Heart right ventricle (tissue), 16 donors: ENCODE measurements at regions of chr9 and their contacts with region 1.

Region 1: DNA sequence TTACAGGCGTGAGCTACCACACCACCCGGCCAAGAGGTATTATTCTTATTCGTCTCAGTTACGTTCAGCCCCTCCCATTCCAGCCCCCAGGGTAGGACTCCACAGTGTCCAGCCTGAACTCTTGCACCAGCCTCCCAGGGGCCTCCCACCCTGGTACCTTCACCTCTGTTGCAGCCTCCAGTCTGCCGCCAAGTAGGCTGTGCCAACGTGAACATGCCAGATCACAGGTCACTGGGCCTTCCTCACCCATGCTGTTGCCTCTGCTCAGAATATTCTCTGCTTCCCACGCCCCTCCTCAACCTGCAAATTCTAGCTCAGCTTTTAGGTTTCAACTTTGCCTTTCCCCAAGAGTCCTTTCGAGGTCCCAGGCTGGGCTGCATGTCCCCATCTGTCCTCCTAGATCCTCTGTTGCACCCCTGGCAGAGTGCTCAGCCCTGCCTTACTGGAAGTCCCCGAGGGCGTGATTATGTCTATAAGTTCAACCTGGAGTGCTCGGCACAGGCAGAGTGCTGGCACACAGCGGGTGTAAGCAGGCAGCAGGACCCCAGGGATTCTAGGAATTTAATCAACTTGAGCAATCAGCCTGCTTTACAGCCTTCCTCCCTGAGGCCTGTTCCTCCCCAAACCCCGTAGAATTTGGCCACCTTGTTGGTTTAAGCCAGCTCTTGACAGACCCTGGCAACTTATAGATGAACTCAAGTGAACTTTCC is 13.1 kb upstream of the STXBP1 start:
- DNase-seq: no peak
- ATAC-seq: no peak
- H3K4me3 ChIP-seq: no peak overlapping the region
- H3K27ac ChIP-seq: no peak overlapping the region
- H3K4me1 ChIP-seq: no peaks in the 10 kb centered on the region
- H3K27me3 ChIP-seq: no peaks in the 10 kb centered on the region
- CTCF ChIP-seq: no peak

Region 2: GRCh38 chr9:126398403-126399058 is 1200.5 kb before region 1 on chr9:
- intact Hi-C with region 1: no loop called
- DNase-seq: peak; percentile 72 to 86
- ATAC-seq: peak; percentile 81 to 93 (median 90)
- H3K4me3 ChIP-seq: no peak overlapping the region
- H3K27ac ChIP-seq: peak overlapping the region in 1 of 10 donors; percentile 46
- H3K4me1 ChIP-seq: peaks cover 0 to 28% (median 5%) of the 10 kb centered on the region in 9 donors
- H3K27me3 ChIP-seq: no peaks in the 10 kb centered on the region
- CTCF ChIP-seq: peak; percentile 93 to 99 (median 98)

Region 3: GRCh38 chr9:127555768-127556397 is 43.1 kb before region 1 on chr9:
- intact Hi-C with region 1: no loop called
- DNase-seq: peak; percentile 54 to 67
- ATAC-seq: peak; percentile 26 to 77 (median 58)
- H3K4me3 ChIP-seq: peak overlapping the region in 1 of 10 donors; percentile 2
- H3K27ac ChIP-seq: peak overlapping the region in 9 of 10 donors; percentile 39 to 90 (median 75)
- H3K4me1 ChIP-seq: peaks cover 25 to 91% (median 76%) of the 10 kb centered on the region in 9 donors
- H3K27me3 ChIP-seq: no peaks in the 10 kb centered on the region
- CTCF ChIP-seq: no peak

Region 4: DNA sequence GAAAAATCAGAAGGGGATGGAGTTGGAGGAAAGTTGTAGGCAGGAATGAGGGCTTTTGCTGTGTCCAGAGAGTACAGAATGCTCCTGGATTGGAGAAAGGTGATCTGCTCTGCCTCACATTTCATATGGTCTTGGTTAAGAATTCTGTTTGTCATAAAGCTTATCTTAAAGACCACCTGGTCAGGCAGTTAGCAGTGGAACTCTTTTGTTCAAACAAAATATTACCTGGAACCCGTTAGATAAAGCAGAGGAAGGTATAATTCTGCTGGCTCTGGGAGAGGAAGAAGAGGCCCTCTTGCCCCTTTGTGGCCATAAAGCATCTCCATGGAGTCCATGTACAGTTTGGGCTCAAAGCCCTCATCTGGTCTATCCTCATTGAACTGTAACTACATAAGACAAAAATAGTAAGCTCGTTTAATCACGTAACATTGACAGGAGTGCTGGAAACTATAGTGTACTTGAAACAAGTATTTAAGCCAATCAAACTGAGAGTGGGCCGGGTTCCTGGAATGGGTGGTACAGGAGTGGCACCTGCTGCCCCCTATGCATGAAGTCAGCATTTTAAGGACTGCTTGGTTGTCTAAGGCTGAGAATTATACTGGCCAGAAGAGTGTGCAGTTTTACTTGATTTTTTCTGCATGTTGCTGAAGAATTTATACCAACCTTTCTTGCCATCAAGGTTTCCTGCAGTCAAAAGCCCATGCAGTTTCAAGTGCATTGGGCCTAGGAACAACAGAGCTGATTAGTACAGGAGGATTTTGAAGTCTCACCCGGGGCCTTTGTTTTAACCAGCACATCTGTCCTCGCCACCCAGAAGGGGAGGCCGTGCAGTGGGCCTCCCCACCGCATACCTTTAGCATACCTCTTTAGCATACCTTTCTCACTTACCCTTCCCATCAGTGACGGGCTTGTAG is 53.0 kb after region 1 on chr9:
- intact Hi-C with region 1: loop called in 2 of 10 experiments (anchors 5 to 10 kb)
- DNase-seq: no peak
- ATAC-seq: peak in 5 of 8 donors; percentile 8 to 70 (median 57)
- H3K4me3 ChIP-seq: no peak overlapping the region
- H3K27ac ChIP-seq: peak overlapping the region in 2 of 10 donors; percentile 40 to 44
- H3K4me1 ChIP-seq: peaks cover 0 to 17% (median 0%) of the 10 kb centered on the region in 9 donors
- H3K27me3 ChIP-seq: no peaks in the 10 kb centered on the region
- CTCF ChIP-seq: peak in 3 of 9 donors; percentile 3 to 15 (median 14)